Vagina (tissue), 2 donors: ENCODE measurements at regions of chr19 and their contacts with region 1.

Region 1: GRCh38 chr19:12882589-12882988 is 1.3 kb upstream of the DNASE2 start:
- DNase-seq: no peak
- H3K4me3 ChIP-seq: no peak overlapping the region
- H3K27ac ChIP-seq: no peak overlapping the region
- H3K4me1 ChIP-seq: peaks cover 25% of the 10 kb centered on the region
- H3K27me3 ChIP-seq: no peaks in the 10 kb centered on the region
- CTCF ChIP-seq: no peak
- POLR2A ChIP-seq: no peak

Region 2: GRCh38 chr19:12953799-12954611 is 71.4 kb after region 1 on chr19:
- intact Hi-C with region 1: loop called (anchors 2 kb)
- DNase-seq: no peak
- H3K4me3 ChIP-seq: no peak overlapping the region
- H3K27ac ChIP-seq: no peak overlapping the region
- H3K4me1 ChIP-seq: peaks cover 55% of the 10 kb centered on the region
- H3K27me3 ChIP-seq: no peaks in the 10 kb centered on the region
- CTCF ChIP-seq: no peak
- POLR2A ChIP-seq: no peak